Naive thymus-derived CD4-positive, alpha-beta T cell (primary cell): ENCODE measurements at regions of chr7 and their contacts with region 1.

Region 1: DNA sequence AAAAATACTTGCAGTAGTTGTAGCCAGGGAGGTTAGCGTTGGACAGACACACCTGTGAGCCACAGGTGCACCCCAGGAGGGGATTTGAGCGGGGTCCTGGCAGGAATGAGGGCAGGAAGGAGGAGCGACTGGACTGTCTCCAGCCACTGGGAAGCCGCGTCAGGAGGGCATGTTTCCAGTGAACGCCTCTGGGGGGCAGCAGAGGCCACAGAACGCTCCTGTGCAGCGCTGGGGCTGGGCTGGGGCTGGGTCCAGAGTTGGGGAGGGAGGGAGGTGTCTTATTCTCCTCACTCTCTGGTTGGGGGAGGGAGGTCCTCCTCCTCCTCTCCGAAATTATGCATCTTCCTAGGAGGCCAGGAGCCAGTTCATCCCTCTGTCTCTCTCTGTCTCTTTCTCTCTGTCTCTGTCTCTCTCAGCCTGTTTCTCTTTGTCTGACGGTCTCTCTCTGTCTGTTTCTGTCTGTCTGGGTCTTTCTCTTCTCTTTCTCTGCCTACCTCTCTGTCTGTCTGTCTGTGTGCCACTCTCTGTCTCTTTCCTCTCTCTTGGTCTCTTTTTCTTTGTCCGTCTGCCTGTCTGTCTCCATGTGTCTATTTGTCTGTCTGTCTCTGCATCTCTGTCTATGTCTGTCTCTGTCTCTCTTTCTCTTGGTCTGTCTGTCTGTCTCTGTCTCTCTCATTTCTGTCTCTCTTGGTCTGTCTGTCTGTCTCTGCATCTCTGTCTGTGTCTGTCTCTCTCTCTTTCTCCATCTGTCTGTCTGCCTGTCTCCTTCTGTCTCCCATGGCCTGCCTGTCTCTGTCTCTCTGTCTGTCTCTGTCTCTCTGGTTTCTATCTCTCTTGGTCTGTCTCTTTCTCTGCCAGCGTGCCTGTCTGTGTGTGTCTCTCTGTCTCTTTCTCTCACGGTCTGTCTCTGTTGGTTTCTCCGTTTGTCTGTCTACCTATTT is 9.9 kb upstream of the PSMG3 start:
- DNase-seq: peak; percentile 40 to 74 (median 60)
- ATAC-seq: peak; percentile 96
- H3K4me3 ChIP-seq: no peak overlapping the region
- H3K4me3 Mint-ChIP-seq: peak overlapping the region in 2 of 10 donors; percentile 37 to 49
- H3K27ac ChIP-seq: no peak overlapping the region
- H3K27ac Mint-ChIP-seq: peak overlapping the region in 7 of 9 donors; percentile 2 to 78 (median 45)
- H3K4me1 ChIP-seq: peaks cover 0 to 6% of the 10 kb centered on the region in 2 donors
- H3K4me1 Mint-ChIP-seq: peaks cover 6 to 18% (median 13%) of the 10 kb centered on the region in 7 donors
- H3K27me3 ChIP-seq: no peaks in the 10 kb centered on the region
- H3K27me3 Mint-ChIP-seq: no peaks in the 10 kb centered on the region

Region 2: DNA sequence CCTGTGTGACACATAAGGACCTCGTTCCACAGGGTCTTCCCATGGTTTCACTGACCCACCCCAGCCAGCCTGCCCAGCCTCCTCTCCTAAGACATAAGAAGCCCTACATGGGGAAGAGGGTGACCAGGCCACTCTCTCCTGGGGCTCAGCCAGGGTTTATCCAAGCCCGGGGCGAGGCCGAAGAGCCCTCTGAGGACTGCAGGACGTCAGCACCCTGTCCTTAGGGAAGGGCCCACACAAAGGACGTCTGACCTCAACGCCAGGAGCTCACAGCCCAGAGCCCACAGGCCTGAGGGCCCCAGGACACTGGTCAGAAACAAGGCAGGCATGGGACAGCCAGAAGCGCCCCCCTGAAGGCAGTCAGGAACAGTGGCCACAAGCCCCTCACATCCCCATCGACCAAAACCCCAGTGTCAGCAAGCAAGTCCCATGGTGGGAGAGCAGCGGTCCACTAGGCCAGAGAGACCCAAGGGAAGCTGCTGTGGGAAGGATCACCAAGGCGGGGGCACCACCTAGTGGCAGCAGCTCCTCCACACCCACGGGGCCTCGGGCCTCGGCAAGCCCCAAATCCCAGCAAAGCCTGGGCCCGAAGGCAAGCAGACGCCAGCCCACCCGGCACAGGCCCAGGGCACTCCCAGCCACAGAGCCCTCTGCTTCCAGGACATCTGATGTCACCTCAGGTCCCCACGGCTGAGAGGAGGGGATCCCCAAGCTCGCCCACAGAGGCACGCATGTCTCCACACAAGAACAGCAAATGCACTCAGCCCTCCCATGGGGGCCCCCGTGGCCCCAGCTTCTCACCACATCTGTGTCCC is 629.6 kb after region 1 on chr7:
- CTCF ChIA-PET with region 1: no interaction called
- POLR2A ChIA-PET with region 1: no interaction called
- intact Hi-C with region 1: loop called in 1 of 2 experiments (anchors 1 kb)
- DNase-seq: peak in 8 of 9 donors; percentile 11 to 41 (median 28)
- ATAC-seq: peak; percentile 62
- H3K4me3 ChIP-seq: no peak overlapping the region
- H3K4me3 Mint-ChIP-seq: no peak overlapping the region
- H3K27ac ChIP-seq: no peak overlapping the region
- H3K27ac Mint-ChIP-seq: no peak overlapping the region
- H3K4me1 ChIP-seq: no peaks in the 10 kb centered on the region
- H3K4me1 Mint-ChIP-seq: peaks cover 0 to 10% (median 0%) of the 10 kb centered on the region in 7 donors
- H3K27me3 ChIP-seq: no peaks in the 10 kb centered on the region
- H3K27me3 Mint-ChIP-seq: no peaks in the 10 kb centered on the region

Region 3: GRCh38 chr7:2360796-2361195 is 781.0 kb after region 1 on chr7:
- CTCF ChIA-PET with region 1: no interaction called
- POLR2A ChIA-PET with region 1: no interaction called
- intact Hi-C with region 1: loop called in 1 of 2 experiments (anchors 1 kb)
- DNase-seq: no peak
- ATAC-seq: no peak
- H3K4me3 ChIP-seq: no peak overlapping the region
- H3K4me3 Mint-ChIP-seq: no peak overlapping the region
- H3K27ac ChIP-seq: no peak overlapping the region
- H3K27ac Mint-ChIP-seq: peak overlapping the region in 2 of 9 donors; percentile 32 to 38
- H3K4me1 ChIP-seq: peaks cover 16 to 30% of the 10 kb centered on the region in 2 donors
- H3K4me1 Mint-ChIP-seq: peaks cover 27 to 47% (median 40%) of the 10 kb centered on the region in 7 donors
- H3K27me3 ChIP-seq: no peaks in the 10 kb centered on the region
- H3K27me3 Mint-ChIP-seq: no peaks in the 10 kb centered on the region